Mammary epithelial cell (primary cell): ENCODE measurements at regions of chr16 and their contacts with region 1.

Region 1: GRCh38 chr16:6633456-6633855 is 699.2 kb upstream of the RBFOX1 start:
- DNase-seq: no peak
- H3K4me3 ChIP-seq: no peak overlapping the region
- H3K27ac ChIP-seq: no peak overlapping the region
- H3K4me1 ChIP-seq: no peaks in the 10 kb centered on the region
- H3K27me3 ChIP-seq: no peaks in the 10 kb centered on the region
- CTCF ChIP-seq: no peak

Region 2: GRCh38 chr16:5305023-5305422 is 1328.4 kb before region 1 on chr16:
- CTCF ChIA-PET with region 1: no interaction called
- dilution Hi-C with region 1: loop called (anchors 10 kb)
- in situ Hi-C with region 1: no loop called
- intact Hi-C with region 1: no loop called
- DNase-seq: no peak
- H3K4me3 ChIP-seq: no peak overlapping the region
- H3K27ac ChIP-seq: no peak overlapping the region
- H3K4me1 ChIP-seq: no peaks in the 10 kb centered on the region
- H3K27me3 ChIP-seq: no peaks in the 10 kb centered on the region
- CTCF ChIP-seq: no peak

Region 3: DNA sequence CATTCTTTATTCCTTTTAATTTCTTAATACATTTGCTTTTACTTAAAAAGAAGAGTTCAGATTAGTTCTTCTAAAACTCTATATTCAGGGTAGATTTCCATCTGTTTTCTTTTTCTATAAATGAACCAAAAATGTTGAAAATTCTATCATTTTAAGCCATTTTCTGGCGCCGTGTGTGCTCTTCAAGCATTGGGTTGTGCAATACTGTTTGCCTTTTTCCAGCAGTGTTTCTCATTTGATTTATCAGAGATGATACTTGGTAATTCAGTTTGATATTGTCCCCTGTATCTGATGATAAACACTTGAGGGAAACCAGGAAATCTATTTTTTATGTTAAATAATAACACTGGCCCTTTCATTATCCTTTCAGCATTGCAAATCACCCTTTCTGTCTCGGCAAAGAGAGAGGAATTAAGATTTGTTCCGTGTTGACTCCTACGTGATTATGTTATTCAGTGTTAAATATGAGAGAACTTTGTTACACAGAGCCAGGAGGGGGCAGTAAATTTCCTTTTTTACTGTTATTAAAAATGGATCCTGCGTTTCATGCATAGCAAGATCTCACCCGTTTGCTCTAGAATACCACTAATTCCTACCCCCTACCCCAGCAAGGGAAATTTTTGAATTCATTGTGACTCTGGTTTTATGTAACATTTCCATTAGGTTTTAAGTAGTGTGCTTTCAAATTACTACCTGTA is 92.3 kb after region 1 on chr16:
- CTCF ChIA-PET with region 1: no interaction called
- dilution Hi-C with region 1: no loop called
- in situ Hi-C with region 1: no loop called
- intact Hi-C with region 1: no loop called
- DNase-seq: no peak
- H3K4me3 ChIP-seq: no peak overlapping the region
- H3K27ac ChIP-seq: no peak overlapping the region
- H3K4me1 ChIP-seq: no peaks in the 10 kb centered on the region
- H3K27me3 ChIP-seq: no peaks in the 10 kb centered on the region
- CTCF ChIP-seq: no peak